Calu3 (cell line): ENCODE measurements at regions of chr3 and their contacts with region 1.

Region 1: DNA sequence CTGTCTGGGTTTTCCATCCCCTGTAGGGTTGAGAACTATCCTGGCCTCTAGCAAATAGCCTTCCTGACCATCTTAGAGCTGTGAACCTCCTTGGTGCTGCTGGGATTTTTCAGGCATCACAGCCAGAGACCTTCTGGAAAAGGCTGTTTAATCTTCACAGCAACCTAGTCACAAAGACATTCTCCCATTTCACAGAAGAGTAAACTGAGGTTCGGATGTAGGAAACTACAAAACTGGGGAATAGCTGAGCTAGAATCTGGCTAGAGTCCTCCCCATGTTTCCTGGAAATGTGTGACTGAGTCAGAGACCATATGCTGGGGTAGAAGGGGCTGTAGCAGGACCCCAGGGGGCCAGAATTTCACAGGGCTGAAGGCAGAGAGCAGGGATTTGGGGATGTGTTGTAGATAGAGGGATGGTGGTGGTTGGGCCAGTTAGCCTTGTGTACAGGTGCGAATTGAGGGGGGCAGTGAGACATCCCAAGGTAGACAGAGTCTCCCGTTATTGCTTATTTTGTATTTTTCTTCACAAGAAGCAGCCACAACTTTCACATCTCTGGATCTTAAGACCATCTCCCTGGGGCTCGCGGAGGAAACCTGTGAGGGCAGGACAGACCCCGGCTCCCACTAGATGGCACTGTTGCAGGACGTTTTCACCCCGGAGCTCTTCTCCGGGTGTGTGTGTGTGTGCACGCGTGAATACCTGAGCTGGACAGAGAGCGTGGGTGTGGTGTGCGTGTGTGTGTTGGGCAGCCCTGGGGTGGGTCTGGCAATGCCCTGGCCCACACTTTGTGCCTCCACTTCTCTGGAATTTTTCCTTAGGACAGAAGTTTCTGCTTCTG is 66.9 kb upstream of the PRR23C start:
- DNase-seq: peak; percentile 92
- H3K4me3 Mint-ChIP-seq: no peak overlapping the region
- H3K27ac Mint-ChIP-seq: no peak overlapping the region
- H3K4me1 Mint-ChIP-seq: no peaks in the 10 kb centered on the region
- H3K27me3 Mint-ChIP-seq: peaks cover 36% of the 10 kb centered on the region
- CTCF ChIP-seq: peak; percentile 94

Region 2: GRCh38 chr3:138786788-138787278 is 324.8 kb before region 1 on chr3:
- CTCF ChIA-PET with region 1: no interaction called
- intact Hi-C with region 1: no loop called
- DNase-seq: no peak
- H3K4me3 Mint-ChIP-seq: no peak overlapping the region
- H3K27ac Mint-ChIP-seq: no peak overlapping the region
- H3K4me1 Mint-ChIP-seq: no peaks in the 10 kb centered on the region
- H3K27me3 Mint-ChIP-seq: no peaks in the 10 kb centered on the region
- CTCF ChIP-seq: no peak

Region 3: GRCh38 chr3:138941259-138941885 is 170.2 kb before region 1 on chr3:
- CTCF ChIA-PET with region 1: interaction called, 9 read pairs
- intact Hi-C with region 1: loop called (anchors 5 kb)
- DNase-seq: peak; percentile 91
- H3K4me3 Mint-ChIP-seq: no peak overlapping the region
- H3K27ac Mint-ChIP-seq: no peak overlapping the region
- H3K4me1 Mint-ChIP-seq: peaks cover 31% of the 10 kb centered on the region
- H3K27me3 Mint-ChIP-seq: peaks cover 94% of the 10 kb centered on the region
- CTCF ChIP-seq: peak; percentile 93

Region 4: DNA sequence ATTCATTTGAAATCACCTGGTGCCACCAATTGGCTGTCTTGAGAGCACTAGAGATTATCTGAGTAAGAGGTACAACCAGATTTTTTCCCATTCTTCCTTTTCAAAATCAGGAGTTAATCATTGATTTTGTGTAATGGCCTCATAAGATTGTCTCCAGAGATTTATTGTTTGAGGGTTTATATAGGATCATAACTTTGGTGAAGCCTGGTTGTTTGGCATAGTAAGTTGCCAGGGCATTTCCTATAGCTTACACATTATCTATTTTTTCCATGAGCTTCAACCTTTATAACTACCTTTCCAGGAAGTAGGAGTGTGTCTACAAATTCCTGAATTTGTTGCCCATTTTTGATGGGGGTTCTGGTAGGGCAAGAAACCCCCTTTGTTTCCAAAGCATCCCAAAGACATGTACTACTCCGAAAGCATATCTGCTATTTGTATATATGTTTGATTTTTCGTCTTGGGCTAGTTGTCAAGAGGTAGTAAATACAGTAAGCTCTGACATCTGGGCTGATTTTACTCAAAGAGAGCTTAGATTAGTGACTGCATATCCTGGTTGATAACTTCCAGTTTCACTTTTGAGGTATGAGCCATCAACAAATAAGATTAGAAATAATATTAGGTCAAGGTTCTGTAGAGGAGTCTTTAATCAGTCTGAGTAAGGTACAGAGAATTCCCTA is 79.1 kb before region 1 on chr3:
- CTCF ChIA-PET with region 1: no interaction called
- intact Hi-C with region 1: no loop called
- DNase-seq: no peak
- H3K4me3 Mint-ChIP-seq: no peak overlapping the region
- H3K27ac Mint-ChIP-seq: no peak overlapping the region
- H3K4me1 Mint-ChIP-seq: peaks cover 8% of the 10 kb centered on the region
- H3K27me3 Mint-ChIP-seq: no peaks in the 10 kb centered on the region
- CTCF ChIP-seq: no peak

Region 5: GRCh38 chr3:139202226-139202958 is 90.8 kb after region 1 on chr3:
- CTCF ChIA-PET with region 1: interaction called, 17 read pairs
- intact Hi-C with region 1: loop called (anchors 2 kb)
- DNase-seq: peak; percentile 87
- H3K4me3 Mint-ChIP-seq: no peak overlapping the region
- H3K27ac Mint-ChIP-seq: peak overlapping the region; percentile 69
- H3K4me1 Mint-ChIP-seq: peaks cover 9% of the 10 kb centered on the region
- H3K27me3 Mint-ChIP-seq: peaks cover 26% of the 10 kb centered on the region
- CTCF ChIP-seq: peak; percentile 35

Region 6: GRCh38 chr3:139302084-139302800 is 190.6 kb after region 1 on chr3:
- CTCF ChIA-PET with region 1: interaction called, 14 read pairs
- intact Hi-C with region 1: no loop called
- DNase-seq: peak; percentile 89
- H3K4me3 Mint-ChIP-seq: peak overlapping the region; percentile 4
- H3K27ac Mint-ChIP-seq: peak overlapping the region; percentile 71
- H3K4me1 Mint-ChIP-seq: peaks cover 69% of the 10 kb centered on the region
- H3K27me3 Mint-ChIP-seq: no peaks in the 10 kb centered on the region
- CTCF ChIP-seq: no peak

Region 7: DNA sequence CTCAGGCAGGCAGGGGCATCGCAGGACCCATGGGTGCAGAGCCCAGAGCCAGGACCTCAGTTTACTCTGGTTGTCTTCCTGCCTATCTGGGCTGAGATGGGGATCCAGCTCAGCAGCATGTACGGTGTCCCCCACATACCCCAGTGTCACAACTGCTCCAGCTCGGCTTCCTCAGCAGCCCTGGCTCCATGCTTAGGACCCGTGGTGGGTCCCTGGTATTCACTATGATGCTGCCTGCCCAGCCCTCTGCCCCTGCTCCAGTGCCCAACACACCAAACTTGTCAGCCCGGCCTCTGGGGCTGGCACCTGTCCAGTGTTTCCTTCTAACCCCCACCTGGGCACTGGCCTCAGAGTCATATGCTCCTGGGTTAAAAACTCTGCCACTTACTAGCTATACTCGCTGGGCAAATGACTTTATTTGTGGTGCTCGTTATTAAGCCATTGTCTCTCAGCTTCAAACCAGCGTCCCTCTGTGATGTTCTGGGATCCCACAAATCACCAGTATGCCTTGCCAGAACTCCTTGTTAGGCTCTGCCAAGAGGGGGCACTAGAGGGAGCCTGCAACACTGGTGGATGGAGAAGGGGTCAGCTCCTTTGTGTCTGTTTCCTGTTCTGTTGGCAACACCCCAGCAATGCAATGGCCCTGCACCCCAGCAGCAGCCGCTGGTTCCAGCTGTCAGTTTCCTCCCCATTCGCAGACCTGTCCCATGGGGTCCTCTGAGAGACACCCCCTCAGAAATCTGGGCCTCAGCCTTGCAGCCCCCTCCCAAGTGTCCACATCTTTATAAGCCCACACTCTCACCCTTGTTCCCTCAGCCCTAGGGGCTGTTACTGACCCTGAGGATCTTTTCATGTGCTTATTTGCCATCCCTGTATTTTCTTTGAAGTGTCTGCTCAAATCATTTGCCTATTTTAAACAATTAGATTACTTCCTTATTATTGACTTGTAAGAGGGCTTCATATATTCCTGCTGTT is 208.1 kb after region 1 on chr3:
- CTCF ChIA-PET with region 1: interaction called, 15 read pairs
- intact Hi-C with region 1: no loop called
- DNase-seq: peak; percentile 65
- H3K4me3 Mint-ChIP-seq: no peak overlapping the region
- H3K27ac Mint-ChIP-seq: no peak overlapping the region
- H3K4me1 Mint-ChIP-seq: peaks cover 39% of the 10 kb centered on the region
- H3K27me3 Mint-ChIP-seq: no peaks in the 10 kb centered on the region
- CTCF ChIP-seq: no peak

Region 8: DNA sequence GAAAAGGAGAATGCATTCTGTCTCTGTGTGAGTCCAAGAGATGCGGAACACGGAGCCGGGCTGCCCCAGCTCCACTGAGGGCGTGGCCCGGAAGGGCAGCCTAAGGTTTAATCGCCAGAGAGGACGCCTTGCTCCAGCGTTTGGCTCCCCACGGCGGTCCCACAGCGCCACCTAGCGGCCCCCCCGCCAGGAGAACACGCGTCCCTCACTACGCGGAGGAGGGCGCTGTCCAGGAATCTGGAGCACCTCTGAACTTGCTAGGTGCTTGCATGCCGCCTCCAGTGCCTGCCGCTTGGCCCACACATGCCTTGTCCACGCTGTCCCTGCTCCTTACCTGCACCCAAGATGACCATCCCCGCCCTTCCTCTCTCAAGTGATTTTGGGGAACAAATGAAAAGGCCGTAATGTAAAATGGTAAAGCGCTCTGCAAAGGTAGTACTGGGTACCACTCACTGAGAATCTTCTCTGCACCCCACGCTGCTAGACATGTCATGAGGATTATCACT is 217.8 kb after region 1 on chr3:
- CTCF ChIA-PET with region 1: interaction called, 74 read pairs
- intact Hi-C with region 1: loop called (anchors 2 kb)
- DNase-seq: peak; percentile 99
- H3K4me3 Mint-ChIP-seq: peak overlapping the region; percentile 12
- H3K27ac Mint-ChIP-seq: no peak overlapping the region
- H3K4me1 Mint-ChIP-seq: no peaks in the 10 kb centered on the region
- H3K27me3 Mint-ChIP-seq: peaks cover 47% of the 10 kb centered on the region
- CTCF ChIP-seq: peak; percentile 100

Region 9: GRCh38 chr3:139353920-139354556 is 242.4 kb after region 1 on chr3:
- CTCF ChIA-PET with region 1: interaction called, 26 read pairs
- intact Hi-C with region 1: no loop called
- DNase-seq: peak; percentile 70
- H3K4me3 Mint-ChIP-seq: no peak overlapping the region
- H3K27ac Mint-ChIP-seq: no peak overlapping the region
- H3K4me1 Mint-ChIP-seq: no peaks in the 10 kb centered on the region
- H3K27me3 Mint-ChIP-seq: no peaks in the 10 kb centered on the region
- CTCF ChIP-seq: peak; percentile 78